ENCODE measurements at regions of chr1 and their contacts with region 1.

Region 1: DNA sequence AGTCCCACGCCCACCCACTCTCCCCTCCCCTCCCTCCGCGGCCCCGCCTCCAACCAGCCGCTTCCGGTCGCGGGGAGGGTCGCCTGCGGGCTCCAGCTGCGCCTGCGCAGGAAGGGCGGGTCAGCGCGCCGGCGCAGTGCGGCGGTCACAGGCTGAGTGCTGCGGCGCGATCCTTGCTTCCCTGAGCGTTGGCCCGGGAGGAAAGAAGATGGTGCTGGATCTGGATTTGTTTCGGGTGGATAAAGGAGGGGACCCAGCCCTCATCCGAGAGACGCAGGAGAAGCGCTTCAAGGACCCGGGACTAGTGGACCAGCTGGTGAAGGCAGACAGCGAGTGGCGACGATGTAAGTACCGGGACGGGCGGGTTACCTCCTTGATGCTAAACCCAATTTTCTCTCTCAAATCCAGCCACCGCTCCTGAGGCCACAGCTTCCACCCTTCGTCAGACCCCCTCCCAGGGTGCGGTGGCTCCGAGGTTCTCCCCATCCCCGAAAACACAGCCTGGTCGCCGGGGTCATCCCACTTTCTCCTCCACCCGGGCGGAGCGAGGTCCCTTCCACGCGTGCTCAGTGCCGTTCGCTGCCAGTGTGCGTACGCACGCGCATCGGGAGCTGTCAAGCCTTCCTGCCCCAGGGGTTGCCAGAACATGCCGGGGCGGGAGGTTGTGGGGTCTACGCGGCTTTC is at the start of gene SARS1:
- DNase-seq: peak; percentile 87 to 95 (median 90)
- ATAC-seq: peak; percentile 94 to 97 (median 96)
- H3K4me3 ChIP-seq: peak within 1 kb of the TSS; percentile 40 to 99 (median 90)
- H3K27ac ChIP-seq: peak within 1 kb of the TSS; percentile 77 to 96 (median 91)
- H3K4me1 ChIP-seq: peaks cover 0 to 43% (median 24%) of the 10 kb centered on the region in 12 donors
- H3K27me3 ChIP-seq: no peaks in the 10 kb centered on the region
- CTCF ChIP-seq: peak in 1 of 12 donors; percentile 6
- POLR2A ChIP-seq: peak in 1 of 2 donors; percentile 88
- total RNA-seq, gene SARS1: 88.5 to 113 (median 102) TPM

Region 2: DNA sequence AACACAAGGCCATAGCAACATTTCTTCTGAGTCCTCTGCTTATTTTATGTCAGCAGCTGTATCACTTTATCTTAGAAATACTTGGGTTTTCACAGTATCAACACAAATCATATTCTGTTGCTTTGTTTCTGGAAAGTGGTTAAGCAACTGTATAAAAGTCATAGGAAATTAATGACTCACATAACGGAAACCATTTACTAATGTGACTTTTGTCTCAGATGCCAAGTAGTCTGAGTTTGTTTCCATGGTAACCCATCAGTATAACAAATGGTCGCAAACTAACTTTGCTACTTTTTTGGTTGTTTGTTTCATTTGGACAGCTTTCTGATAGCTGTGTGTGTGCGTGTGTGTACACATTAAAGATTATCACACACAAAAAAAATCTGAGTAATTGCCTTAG is 623.0 kb before region 1 on chr1:
- intact Hi-C with region 1: no loop called
- DNase-seq: peak in 1 of 5 donors; percentile 27
- ATAC-seq: peak; percentile 57 to 84 (median 79)
- H3K4me3 ChIP-seq: peak overlapping the region in 3 of 12 donors; percentile 1 to 27 (median 9)
- H3K27ac ChIP-seq: peak overlapping the region; percentile 10 to 88 (median 62)
- H3K4me1 ChIP-seq: peaks cover 0 to 51% (median 25%) of the 10 kb centered on the region in 12 donors
- H3K27me3 ChIP-seq: no peaks in the 10 kb centered on the region
- CTCF ChIP-seq: no peak
- POLR2A ChIP-seq: no peak

Region 3: GRCh38 chr1:108963052-108963686 is 250.8 kb before region 1 on chr1 and contains the start of gene CLCC1:
- intact Hi-C with region 1: no loop called
- DNase-seq: peak; percentile 94 to 95 (median 95)
- ATAC-seq: peak; percentile 95 to 99 (median 98)
- H3K4me3 ChIP-seq: peak within 1 kb of the TSS; percentile 66 to 87 (median 77)
- H3K27ac ChIP-seq: peak within 1 kb of the TSS; percentile 85 to 99 (median 96)
- H3K4me1 ChIP-seq: peaks cover 0 to 26% (median 14%) of the 10 kb centered on the region in 12 donors
- H3K27me3 ChIP-seq: no peaks in the 10 kb centered on the region
- CTCF ChIP-seq: peak in 1 of 12 donors; percentile 9
- POLR2A ChIP-seq: peak in 1 of 2 donors; percentile 90
- total RNA-seq, gene CLCC1: 21.6 to 33.0 (median 27.9) TPM

Region 4: DNA sequence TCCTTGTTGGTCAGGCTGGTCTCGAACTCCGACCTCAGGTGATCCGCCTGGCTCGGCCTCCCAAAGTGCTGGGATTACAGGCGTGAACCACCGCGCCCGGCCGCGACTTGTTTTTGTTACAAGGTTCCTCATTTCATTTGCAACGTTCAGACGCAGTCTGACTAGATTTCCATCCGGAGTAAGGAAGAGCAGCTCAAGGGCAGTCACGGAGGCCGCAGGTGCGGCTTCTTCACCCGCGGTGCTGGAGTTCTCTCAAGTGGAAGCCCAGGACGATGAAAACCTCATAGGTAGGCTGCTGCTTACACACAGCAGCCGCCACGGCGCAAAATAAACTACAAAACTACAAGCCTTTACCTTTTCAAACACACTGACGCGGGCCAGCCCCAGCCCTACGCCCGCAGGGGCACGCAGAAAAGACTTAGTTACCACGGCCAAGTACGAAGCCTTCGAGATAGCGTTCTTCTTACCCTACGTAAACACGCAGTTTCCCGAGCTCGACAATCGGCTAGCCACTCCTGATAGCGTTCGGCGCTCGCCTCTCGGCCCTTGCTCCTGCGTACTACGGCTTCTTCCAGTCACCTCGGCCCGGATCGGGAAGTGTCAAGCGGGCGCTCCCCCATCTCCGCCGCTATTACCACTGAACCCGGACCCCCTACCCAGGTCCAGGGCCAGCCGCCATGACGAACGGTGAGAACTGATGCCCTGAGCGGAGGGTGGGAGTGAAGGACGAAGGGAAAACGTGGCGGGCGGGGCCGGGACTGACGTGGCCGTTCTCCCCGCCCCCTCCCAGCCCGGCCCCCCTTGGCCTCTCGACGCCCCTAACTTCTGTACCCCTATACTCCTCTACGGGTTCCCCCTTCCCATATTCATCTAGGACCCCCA is 123.5 kb before region 1 on chr1 and contains the start of gene TMEM167B:
- intact Hi-C with region 1: no loop called
- DNase-seq: peak; percentile 92 to 96 (median 94)
- ATAC-seq: peak; percentile 90 to 97 (median 94)
- H3K4me3 ChIP-seq: peak within 1 kb of the TSS; percentile 56 to 95 (median 88)
- H3K27ac ChIP-seq: peak within 1 kb of the TSS; percentile 93 to 99 (median 98)
- H3K4me1 ChIP-seq: peaks cover 0 to 51% (median 24%) of the 10 kb centered on the region in 12 donors
- H3K27me3 ChIP-seq: no peaks in the 10 kb centered on the region
- CTCF ChIP-seq: no peak
- POLR2A ChIP-seq: peak in 1 of 2 donors; percentile 77
- total RNA-seq, gene TMEM167B: 14.1 to 52.9 (median 29.9) TPM

Region 5: DNA sequence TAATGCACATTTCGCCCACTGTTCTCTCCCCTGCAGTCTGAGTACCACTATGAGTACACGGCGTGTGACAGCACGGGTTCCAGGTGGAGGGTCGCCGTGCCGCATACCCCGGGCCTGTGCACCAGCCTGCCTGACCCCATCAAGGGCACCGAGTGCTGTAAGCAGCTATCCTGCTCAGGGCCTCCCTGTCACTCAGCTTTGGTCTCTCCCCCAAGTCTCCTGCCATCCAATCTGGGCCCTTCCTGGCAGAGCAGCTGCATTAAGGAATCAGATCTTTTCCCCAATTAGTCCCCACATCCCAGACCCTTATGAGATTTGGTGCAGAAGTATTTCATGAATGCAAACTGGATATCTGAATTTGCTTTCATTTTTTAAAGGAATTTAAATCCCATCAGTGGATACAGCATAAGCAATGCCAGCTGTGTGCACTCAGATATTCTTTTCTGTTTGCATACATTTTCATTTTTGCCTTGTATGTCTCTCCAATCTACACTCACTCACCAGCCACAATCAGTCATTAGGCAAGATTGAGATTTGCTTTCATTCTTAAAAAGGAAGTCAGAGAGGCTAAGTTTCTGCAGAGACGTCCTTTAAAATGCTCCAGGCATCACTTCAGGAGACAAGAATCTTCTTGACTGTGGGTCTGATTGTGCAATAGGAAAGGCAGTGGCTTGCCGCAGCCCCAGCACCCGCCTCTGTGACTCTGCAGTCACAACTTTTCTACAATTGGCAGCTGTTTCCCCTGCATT is 51.9 kb before region 1 on chr1:
- intact Hi-C with region 1: loop called in 1 of 10 experiments (anchors 2 kb)
- DNase-seq: peak in 3 of 5 donors; percentile 16 to 57 (median 34)
- ATAC-seq: peak; percentile 38 to 83 (median 74)
- H3K4me3 ChIP-seq: peak overlapping the region in 2 of 12 donors; percentile 25 to 30
- H3K27ac ChIP-seq: peak overlapping the region in 6 of 12 donors; percentile 11 to 77 (median 28)
- H3K4me1 ChIP-seq: peaks cover 0 to 18% (median 3%) of the 10 kb centered on the region in 12 donors
- H3K27me3 ChIP-seq: no peaks in the 10 kb centered on the region
- CTCF ChIP-seq: no peak
- POLR2A ChIP-seq: no peak

Region 6: GRCh38 chr1:109263597-109264398 is 49.9 kb after region 1 on chr1:
- intact Hi-C with region 1: no loop called
- DNase-seq: peak; percentile 75 to 89 (median 83)
- ATAC-seq: peak; percentile 80 to 88 (median 87)
- H3K4me3 ChIP-seq: no peak overlapping the region
- H3K27ac ChIP-seq: no peak overlapping the region
- H3K4me1 ChIP-seq: peaks cover 0 to 9% (median 0%) of the 10 kb centered on the region in 12 donors
- H3K27me3 ChIP-seq: no peaks in the 10 kb centered on the region
- CTCF ChIP-seq: peak; percentile 81 to 95 (median 88)
- POLR2A ChIP-seq: no peak

Measured in heart left ventricle (tissue), 16 donors.